Naive thymus-derived CD4-positive, alpha-beta T cell (primary cell): ENCODE measurements at regions of chr7 and their contacts with region 1.

Region 1: DNA sequence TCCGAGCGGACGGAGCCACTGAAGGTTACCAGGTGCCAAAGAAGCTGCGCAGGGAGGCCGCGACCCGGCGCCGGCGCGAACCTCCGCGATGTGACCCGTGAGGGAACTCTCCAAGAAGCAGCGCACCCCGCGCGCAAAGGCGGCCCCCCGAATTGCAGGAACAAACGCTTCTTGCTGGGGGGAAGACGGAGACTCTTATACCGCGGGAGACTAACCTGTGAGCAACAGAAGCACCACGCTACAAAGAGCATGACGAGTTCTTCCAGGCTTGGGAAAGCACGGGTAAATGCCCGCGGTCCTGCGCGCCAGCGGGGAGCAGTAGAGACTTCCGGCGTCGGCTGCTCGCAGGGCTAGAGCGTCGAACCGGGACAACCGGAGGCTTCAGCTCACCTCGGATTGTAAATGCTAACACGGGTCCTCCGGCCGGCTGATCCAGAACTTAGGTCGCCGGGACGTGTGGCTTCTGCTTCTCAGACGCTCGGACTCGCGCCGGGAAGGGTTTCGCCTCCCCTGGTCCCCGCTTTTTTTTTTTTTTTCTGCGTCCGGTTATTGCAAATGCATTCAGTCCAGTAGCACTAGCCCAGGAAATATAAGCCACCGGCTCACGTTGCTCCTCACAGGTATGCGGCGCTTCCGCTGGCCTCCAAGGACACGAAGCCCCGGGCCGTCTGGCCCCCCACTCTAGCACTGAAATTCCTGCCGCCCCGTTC is at the start of gene COA1:
- DNase-seq: peak; percentile 61 to 85 (median 81)
- ATAC-seq: peak; percentile 98
- H3K4me3 ChIP-seq: peak within 1 kb of the TSS; percentile 91
- H3K4me3 Mint-ChIP-seq: peak within 1 kb of the TSS; percentile 81 to 96 (median 94)
- H3K27ac ChIP-seq: peak within 1 kb of the TSS; percentile 76
- H3K27ac Mint-ChIP-seq: peak within 1 kb of the TSS; percentile 75 to 95 (median 90)
- H3K4me1 ChIP-seq: peaks cover 15 to 24% of the 10 kb centered on the region in 2 donors
- H3K4me1 Mint-ChIP-seq: peaks cover 27 to 57% (median 38%) of the 10 kb centered on the region in 7 donors
- H3K27me3 ChIP-seq: no peaks in the 10 kb centered on the region
- H3K27me3 Mint-ChIP-seq: peaks cover 0 to 4% (median 0%) of the 10 kb centered on the region in 5 donors
- total RNA-seq, gene COA1: 51.3 to 73.3 (median 64.6) TPM

Region 2: DNA sequence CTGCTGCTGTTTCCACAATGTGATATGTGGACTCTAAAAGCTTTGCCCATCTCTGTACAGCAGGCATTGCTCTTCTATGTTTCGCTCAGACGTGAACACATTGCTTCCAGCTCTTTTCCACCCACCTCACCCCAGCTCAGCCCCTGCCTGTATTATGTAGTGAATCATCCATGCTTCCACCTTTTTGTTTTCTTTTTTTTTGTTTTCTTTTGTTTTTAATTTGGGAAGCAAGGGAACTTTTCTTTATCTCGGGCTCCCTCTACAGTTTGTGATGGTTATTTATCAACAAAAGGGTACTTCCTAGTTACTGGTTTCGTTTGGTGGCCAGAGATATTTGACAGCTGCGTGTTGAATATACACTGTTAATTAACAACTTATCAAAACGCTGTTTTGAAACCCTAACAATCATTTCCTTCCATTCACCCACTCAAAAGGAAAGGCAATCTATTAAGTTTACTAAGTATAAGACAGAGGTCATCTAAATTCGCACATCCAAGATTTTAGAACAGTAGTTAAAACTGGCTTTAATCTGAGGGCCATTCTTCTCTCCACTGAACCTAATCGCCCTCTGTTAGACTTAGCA is 274.3 kb before region 1 on chr7:
- CTCF ChIA-PET with region 1: no interaction called
- POLR2A ChIA-PET with region 1: no interaction called
- intact Hi-C with region 1: loop called in 1 of 2 experiments (anchors 10 kb)
- DNase-seq: peak in 1 of 9 donors; percentile 9
- ATAC-seq: peak; percentile 42
- H3K4me3 ChIP-seq: no peak overlapping the region
- H3K4me3 Mint-ChIP-seq: no peak overlapping the region
- H3K27ac ChIP-seq: no peak overlapping the region
- H3K27ac Mint-ChIP-seq: peak overlapping the region in 1 of 9 donors; percentile 20
- H3K4me1 ChIP-seq: no peaks in the 10 kb centered on the region
- H3K4me1 Mint-ChIP-seq: peaks cover 0 to 7% (median 4%) of the 10 kb centered on the region in 7 donors
- H3K27me3 ChIP-seq: no peaks in the 10 kb centered on the region
- H3K27me3 Mint-ChIP-seq: peaks cover 5 to 22% (median 7%) of the 10 kb centered on the region in 5 donors

Region 3: GRCh38 chr7:43758029-43758821 is 28.9 kb after region 1 on chr7 and contains the start of gene BLVRA:
- CTCF ChIA-PET with region 1: no interaction called
- POLR2A ChIA-PET with region 1: interaction called, 8 read pairs
- intact Hi-C with region 1: loop called (anchors 1 kb)
- DNase-seq: peak; percentile 55 to 82 (median 66)
- ATAC-seq: peak; percentile 88
- H3K4me3 ChIP-seq: peak within 1 kb of the TSS; percentile 90
- H3K4me3 Mint-ChIP-seq: peak within 1 kb of the TSS; percentile 72 to 93 (median 89)
- H3K27ac ChIP-seq: peak within 1 kb of the TSS; percentile 77
- H3K27ac Mint-ChIP-seq: peak within 1 kb of the TSS; percentile 72 to 94 (median 88)
- H3K4me1 ChIP-seq: peaks cover 3 to 5% of the 10 kb centered on the region in 2 donors
- H3K4me1 Mint-ChIP-seq: peaks cover 24 to 48% (median 36%) of the 10 kb centered on the region in 7 donors
- H3K27me3 ChIP-seq: no peaks in the 10 kb centered on the region
- H3K27me3 Mint-ChIP-seq: peaks cover 0 to 10% (median 0%) of the 10 kb centered on the region in 5 donors
- total RNA-seq, gene BLVRA: 11.2 to 41.2 (median 16.1) TPM